ENCODE measurements at regions of chr9 and their contacts with region 1.

Region 1: GRCh38 chr9:93064392-93065134 is 6.1 kb downstream of the SUSD3 start:
- DNase-seq: peak; percentile 95
- H3K4me3 Mint-ChIP-seq: peak overlapping the region; percentile 87
- H3K27ac Mint-ChIP-seq: peak overlapping the region; percentile 99
- H3K4me1 Mint-ChIP-seq: peaks cover 89% of the 10 kb centered on the region
- H3K27me3 Mint-ChIP-seq: no peaks in the 10 kb centered on the region

Region 2: GRCh38 chr9:92963831-92964626 is 100.5 kb before region 1 on chr9:
- CTCF ChIA-PET with region 1: no interaction called
- POLR2A ChIA-PET with region 1: interaction called, 4 read pairs
- intact Hi-C with region 1: loop called (anchors 2 kb)
- DNase-seq: peak; percentile 86
- H3K4me3 Mint-ChIP-seq: peak overlapping the region; percentile 96
- H3K27ac Mint-ChIP-seq: peak overlapping the region; percentile 100
- H3K4me1 Mint-ChIP-seq: peaks cover 57% of the 10 kb centered on the region
- H3K27me3 Mint-ChIP-seq: no peaks in the 10 kb centered on the region

Region 3: GRCh38 chr9:93028448-93029006 is 36.0 kb before region 1 on chr9:
- CTCF ChIA-PET with region 1: interaction called, 7 read pairs
- POLR2A ChIA-PET with region 1: interaction called, 6 read pairs
- intact Hi-C with region 1: loop called (anchors 2 kb)
- DNase-seq: peak; percentile 77
- H3K4me3 Mint-ChIP-seq: peak overlapping the region; percentile 62
- H3K27ac Mint-ChIP-seq: peak overlapping the region; percentile 96
- H3K4me1 Mint-ChIP-seq: peaks cover 78% of the 10 kb centered on the region
- H3K27me3 Mint-ChIP-seq: no peaks in the 10 kb centered on the region

Region 4: GRCh38 chr9:93108291-93109041 is 43.9 kb after region 1 on chr9:
- CTCF ChIA-PET with region 1: interaction called, 11 read pairs
- POLR2A ChIA-PET with region 1: interaction called, 5 read pairs
- intact Hi-C with region 1: loop called (anchors 1 kb)
- DNase-seq: peak; percentile 82
- H3K4me3 Mint-ChIP-seq: no peak overlapping the region
- H3K27ac Mint-ChIP-seq: peak overlapping the region; percentile 77
- H3K4me1 Mint-ChIP-seq: peaks cover 55% of the 10 kb centered on the region
- H3K27me3 Mint-ChIP-seq: no peaks in the 10 kb centered on the region

Region 5: GRCh38 chr9:93154315-93154903 is 89.8 kb after region 1 on chr9:
- CTCF ChIA-PET with region 1: no interaction called
- POLR2A ChIA-PET with region 1: no interaction called
- intact Hi-C with region 1: loop called (anchors 1 kb)
- DNase-seq: peak; percentile 69
- H3K4me3 Mint-ChIP-seq: no peak overlapping the region
- H3K27ac Mint-ChIP-seq: no peak overlapping the region
- H3K4me1 Mint-ChIP-seq: peaks cover 30% of the 10 kb centered on the region
- H3K27me3 Mint-ChIP-seq: no peaks in the 10 kb centered on the region

Region 6: DNA sequence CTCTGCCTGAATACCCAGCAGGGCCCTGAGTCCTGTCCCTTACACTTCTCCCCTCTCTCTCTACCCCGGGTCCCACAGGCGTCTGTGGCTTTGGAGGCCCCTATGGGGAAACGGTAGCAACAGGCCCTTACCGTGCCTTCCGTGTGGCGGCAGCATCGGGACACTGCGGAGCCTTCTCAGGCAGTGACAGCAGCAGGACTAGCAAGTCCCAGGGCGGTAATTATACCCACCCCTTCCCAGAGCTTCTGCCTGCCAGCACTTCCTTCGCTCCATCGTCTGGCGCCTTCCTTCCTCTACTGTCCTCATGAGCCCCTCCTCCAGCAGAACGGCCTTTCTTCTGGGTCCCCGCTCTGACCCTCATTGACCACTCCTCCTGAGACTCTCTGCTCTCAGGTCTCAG is 493.9 kb after region 1 on chr9:
- CTCF ChIA-PET with region 1: no interaction called
- POLR2A ChIA-PET with region 1: no interaction called
- intact Hi-C with region 1: no loop called
- DNase-seq: no peak
- H3K4me3 Mint-ChIP-seq: no peak overlapping the region
- H3K27ac Mint-ChIP-seq: no peak overlapping the region
- H3K4me1 Mint-ChIP-seq: no peaks in the 10 kb centered on the region
- H3K27me3 Mint-ChIP-seq: no peaks in the 10 kb centered on the region